Naive thymus-derived CD4-positive, alpha-beta T cell (primary cell): ENCODE measurements at regions of chrX and their contacts with region 1.

Region 1: GRCh38 chrX:137427806-137428205 is 138.1 kb upstream of the ZIC3 start:
- DNase-seq: no peak
- ATAC-seq: peak; percentile 22
- H3K4me3 ChIP-seq: peak overlapping the region; percentile 51
- H3K4me3 Mint-ChIP-seq: peak overlapping the region; percentile 55 to 86 (median 82)
- H3K27ac ChIP-seq: no peak overlapping the region
- H3K27ac Mint-ChIP-seq: no peak overlapping the region
- H3K4me1 ChIP-seq: peaks cover 0 to 13% of the 10 kb centered on the region in 2 donors
- H3K4me1 Mint-ChIP-seq: peaks cover 0 to 24% (median 10%) of the 10 kb centered on the region in 7 donors
- H3K27me3 ChIP-seq: peaks cover 0 to 26% of the 10 kb centered on the region in 2 donors
- H3K27me3 Mint-ChIP-seq: peaks cover 30 to 68% (median 51%) of the 10 kb centered on the region in 5 donors

Region 2: GRCh38 chrX:137401092-137401491 is 26.7 kb before region 1 on chrX:
- CTCF ChIA-PET with region 1: no interaction called
- POLR2A ChIA-PET with region 1: no interaction called
- intact Hi-C with region 1: no loop called
- DNase-seq: no peak
- ATAC-seq: no peak
- H3K4me3 ChIP-seq: no peak overlapping the region
- H3K4me3 Mint-ChIP-seq: no peak overlapping the region
- H3K27ac ChIP-seq: no peak overlapping the region
- H3K27ac Mint-ChIP-seq: no peak overlapping the region
- H3K4me1 ChIP-seq: no peaks in the 10 kb centered on the region
- H3K4me1 Mint-ChIP-seq: no peaks in the 10 kb centered on the region
- H3K27me3 ChIP-seq: no peaks in the 10 kb centered on the region
- H3K27me3 Mint-ChIP-seq: peaks cover 0 to 30% (median 14%) of the 10 kb centered on the region in 5 donors

Region 3: DNA sequence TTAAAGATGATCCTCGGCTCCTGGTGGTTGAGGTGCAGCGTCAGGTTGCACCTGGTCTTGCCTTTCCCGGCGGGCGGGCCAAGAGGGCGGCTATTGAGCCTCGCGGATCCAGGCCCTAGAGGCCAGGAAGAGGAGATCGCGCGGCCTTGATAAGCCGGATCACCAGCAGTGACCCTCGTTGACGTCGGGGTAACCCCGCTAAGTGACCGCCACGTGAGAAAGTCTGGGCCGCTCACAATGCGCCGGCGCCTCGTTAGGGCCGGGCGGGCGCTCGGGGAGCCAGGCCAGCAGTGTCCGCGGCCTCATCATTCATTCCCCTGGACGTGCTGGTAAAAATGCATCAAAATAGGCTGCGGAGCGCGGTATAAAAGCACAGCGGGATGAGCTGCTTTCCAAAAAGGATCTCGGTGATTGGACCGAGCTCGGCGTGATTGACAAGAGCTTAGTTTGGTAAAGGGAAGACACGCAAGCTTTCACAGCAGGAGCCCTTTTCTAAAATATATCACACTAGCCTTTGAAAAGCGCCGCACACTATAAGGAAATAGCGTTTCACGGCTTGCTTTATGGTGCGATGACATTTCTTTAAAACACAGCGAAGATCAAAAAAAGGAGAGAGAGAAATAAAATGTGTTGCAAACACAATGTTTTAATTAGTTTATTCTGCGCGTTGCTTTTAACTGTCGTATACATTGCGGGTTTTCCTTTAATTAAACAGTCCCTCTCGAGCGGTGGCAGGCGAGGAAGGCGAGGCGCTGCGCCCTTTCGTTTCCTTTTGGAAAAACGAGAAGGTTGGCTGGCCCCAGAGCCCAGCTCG is 122.3 kb after region 1 on chrX:
- CTCF ChIA-PET with region 1: no interaction called
- POLR2A ChIA-PET with region 1: no interaction called
- intact Hi-C with region 1: loop called in 1 of 2 experiments (anchors 1 kb)
- DNase-seq: no peak
- ATAC-seq: no peak
- H3K4me3 ChIP-seq: no peak overlapping the region
- H3K4me3 Mint-ChIP-seq: peak overlapping the region in 8 of 10 donors; percentile 10 to 75 (median 60)
- H3K27ac ChIP-seq: no peak overlapping the region
- H3K27ac Mint-ChIP-seq: peak overlapping the region in 1 of 9 donors; percentile 46
- H3K4me1 ChIP-seq: no peaks in the 10 kb centered on the region
- H3K4me1 Mint-ChIP-seq: peaks cover 0 to 17% (median 14%) of the 10 kb centered on the region in 7 donors
- H3K27me3 ChIP-seq: no peaks in the 10 kb centered on the region
- H3K27me3 Mint-ChIP-seq: peaks cover 24 to 52% (median 47%) of the 10 kb centered on the region in 5 donors